ENCODE measurements at regions of chr2 and their contacts with region 1.

Region 1: DNA sequence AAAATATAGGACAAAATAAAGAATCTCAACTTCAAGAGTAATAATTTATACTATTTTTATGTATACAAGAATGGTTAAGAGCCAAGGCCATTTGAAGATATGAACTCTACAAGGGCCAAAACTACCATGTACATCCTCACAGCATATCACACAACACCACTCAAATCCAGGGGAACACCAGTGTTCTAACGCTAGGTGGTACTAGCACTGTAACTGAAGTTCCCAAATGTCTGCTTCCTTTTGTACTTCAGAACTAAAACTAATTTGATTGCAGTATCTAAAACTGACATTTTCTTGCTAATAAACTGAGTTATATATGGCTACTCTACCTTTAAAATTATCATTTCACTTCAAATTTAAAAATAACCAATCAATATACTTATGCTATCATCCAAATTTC is 47.0 kb downstream of the REV1 start:
- DNase-seq: no peak
- H3K4me3 ChIP-seq: no peak overlapping the region
- H3K4me3 Mint-ChIP-seq: no peak overlapping the region
- H3K27ac Mint-ChIP-seq: no peak overlapping the region
- H3K4me1 ChIP-seq: no peaks in the 10 kb centered on the region
- H3K4me1 Mint-ChIP-seq: no peaks in the 10 kb centered on the region
- H3K27me3 ChIP-seq: no peaks in the 10 kb centered on the region
- H3K27me3 Mint-ChIP-seq: no peaks in the 10 kb centered on the region
- CTCF ChIP-seq: peak; percentile 20 to 42

Region 2: DNA sequence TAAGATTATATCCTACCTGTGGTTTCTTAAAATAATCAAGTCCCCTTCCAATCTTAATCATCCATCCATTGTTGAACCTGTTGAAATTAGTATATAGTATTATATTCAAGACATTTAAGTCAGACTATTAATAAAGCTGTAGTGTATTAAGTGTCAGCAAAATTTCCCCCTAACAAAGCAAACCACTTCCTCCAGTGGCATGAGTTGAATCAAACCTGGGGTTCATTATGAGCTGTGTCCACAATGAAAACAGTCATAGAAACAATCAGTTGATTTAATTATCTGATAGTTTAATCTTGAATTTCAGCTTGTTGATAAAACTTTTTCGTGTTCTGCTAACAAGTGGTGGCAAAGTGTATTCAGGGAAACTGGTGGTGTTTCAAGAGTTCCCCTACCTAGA is 273.3 kb before region 1 on chr2:
- CTCF ChIA-PET with region 1: no interaction called
- POLR2A ChIA-PET with region 1: no interaction called
- intact Hi-C with region 1: no loop called
- DNase-seq: no peak
- H3K4me3 ChIP-seq: no peak overlapping the region
- H3K4me3 Mint-ChIP-seq: no peak overlapping the region
- H3K27ac Mint-ChIP-seq: no peak overlapping the region
- H3K4me1 ChIP-seq: no peaks in the 10 kb centered on the region
- H3K4me1 Mint-ChIP-seq: no peaks in the 10 kb centered on the region
- H3K27me3 ChIP-seq: no peaks in the 10 kb centered on the region
- H3K27me3 Mint-ChIP-seq: no peaks in the 10 kb centered on the region
- CTCF ChIP-seq: no peak

Region 3: DNA sequence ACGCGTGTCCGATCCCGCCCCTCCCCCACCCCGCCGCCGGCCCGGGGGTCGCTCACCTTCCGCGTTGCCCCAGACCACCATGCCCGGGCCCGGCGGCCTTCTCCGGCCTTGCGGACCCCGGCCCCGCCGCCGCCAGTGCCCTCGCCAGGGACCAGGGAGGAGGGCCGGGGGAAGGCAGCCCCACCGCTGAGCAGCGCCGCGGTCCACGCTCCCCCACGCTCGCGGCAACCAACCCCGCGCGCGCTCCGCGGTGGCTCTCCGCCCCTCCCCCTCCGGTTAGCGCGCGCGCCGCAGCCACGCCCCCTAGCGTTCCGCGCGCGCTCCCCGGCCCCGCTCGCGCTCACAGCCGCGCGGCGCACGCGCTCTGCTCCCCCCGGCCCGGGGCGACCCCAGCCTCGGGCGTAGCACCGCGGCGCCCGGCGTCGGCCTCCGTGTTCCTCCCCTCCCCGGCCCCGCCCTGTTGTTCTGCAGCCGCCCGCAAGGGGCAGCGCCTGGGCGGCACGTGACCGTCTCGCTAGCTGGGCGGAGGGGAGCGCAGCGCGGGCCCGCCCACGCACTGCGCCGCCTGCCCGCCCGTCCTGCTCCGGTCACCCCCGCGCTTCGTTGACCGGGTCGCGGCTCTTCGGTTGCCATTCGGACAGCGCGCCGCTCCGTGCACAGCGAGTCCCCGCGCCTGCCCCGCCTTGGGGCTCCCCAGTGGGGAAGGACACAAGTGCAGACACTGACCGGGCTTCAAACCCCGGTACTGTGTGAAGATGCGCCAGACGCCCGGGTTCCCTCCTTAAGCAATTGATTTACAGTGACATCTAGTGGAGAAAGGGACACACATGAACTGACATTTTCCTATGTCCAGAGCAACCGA is 47.2 kb after region 1 on chr2 and contains the start of gene REV1:
- CTCF ChIA-PET with region 1: no interaction called
- POLR2A ChIA-PET with region 1: no interaction called
- intact Hi-C with region 1: loop called (anchors 2 kb)
- DNase-seq: peak; percentile 94 to 97
- H3K4me3 ChIP-seq: peak within 1 kb of the TSS; percentile 87
- H3K4me3 Mint-ChIP-seq: peak within 1 kb of the TSS; percentile 100
- H3K27ac Mint-ChIP-seq: peak within 1 kb of the TSS; percentile 99
- H3K4me1 ChIP-seq: peaks cover 5% of the 10 kb centered on the region; the same call in 1 of the 2 replicates
- H3K4me1 Mint-ChIP-seq: peaks cover 7% of the 10 kb centered on the region
- H3K27me3 ChIP-seq: no peaks in the 10 kb centered on the region
- H3K27me3 Mint-ChIP-seq: no peaks in the 10 kb centered on the region
- CTCF ChIP-seq: peak; percentile 65 to 83
- total RNA-seq, gene REV1: 39.6 and 41.1 TPM in 2 replicates